HCT116 (cell line): ENCODE measurements at regions of chr11 and their contacts with region 1.

Region 1: DNA sequence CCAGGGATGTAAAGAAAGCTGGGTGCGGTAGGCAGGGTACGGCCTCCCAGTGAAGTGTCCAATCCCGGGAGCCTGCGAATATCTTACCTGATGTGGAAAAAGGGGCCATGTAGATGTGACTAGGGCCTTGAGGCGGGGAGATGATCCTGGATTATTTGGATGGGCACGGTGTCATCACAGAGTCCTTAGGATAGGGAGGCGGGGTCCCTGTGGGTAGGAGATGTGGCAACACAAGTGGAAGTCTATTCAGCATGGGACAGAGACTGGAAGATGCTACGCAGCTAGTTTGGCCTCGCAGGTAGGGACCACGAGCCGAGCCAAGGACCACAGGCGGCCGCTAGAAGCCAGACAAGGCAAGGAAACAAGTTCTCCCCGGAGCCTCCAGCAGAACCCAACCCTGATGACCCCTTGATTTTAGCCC is 46.4 kb upstream of the SHANK2 start:
- DNase-seq: no peak
- ATAC-seq: peak; percentile 10; the same call in 1 of the 2 replicates
- H3K4me3 ChIP-seq: peak overlapping the region; percentile 23 to 46
- H3K27ac ChIP-seq: peak overlapping the region; percentile 59; the same call in 1 of the 2 replicates
- H3K4me1 ChIP-seq: peaks cover 15 to 41% of the 10 kb centered on the region in 2 experiments
- H3K27me3 ChIP-seq: no peaks in the 10 kb centered on the region
- CTCF ChIP-seq: no peak
- POLR2A ChIP-seq: no peak
- RAD21 ChIP-seq: no peak

Region 2: GRCh38 chr11:70915158-70915985 is 383.4 kb before region 1 on chr11:
- CTCF ChIA-PET with region 1: no interaction called
- POLR2A ChIA-PET with region 1: no interaction called
- RAD21 ChIA-PET with region 1: no interaction called
- intact Hi-C with region 1: no loop called
- DNase-seq: no peak
- ATAC-seq: no peak
- H3K4me3 ChIP-seq: no peak overlapping the region
- H3K27ac ChIP-seq: no peak overlapping the region
- H3K4me1 ChIP-seq: no peaks in the 10 kb centered on the region
- H3K27me3 ChIP-seq: no peaks in the 10 kb centered on the region
- CTCF ChIP-seq: no peak
- POLR2A ChIP-seq: no peak
- RAD21 ChIP-seq: no peak

Region 3: DNA sequence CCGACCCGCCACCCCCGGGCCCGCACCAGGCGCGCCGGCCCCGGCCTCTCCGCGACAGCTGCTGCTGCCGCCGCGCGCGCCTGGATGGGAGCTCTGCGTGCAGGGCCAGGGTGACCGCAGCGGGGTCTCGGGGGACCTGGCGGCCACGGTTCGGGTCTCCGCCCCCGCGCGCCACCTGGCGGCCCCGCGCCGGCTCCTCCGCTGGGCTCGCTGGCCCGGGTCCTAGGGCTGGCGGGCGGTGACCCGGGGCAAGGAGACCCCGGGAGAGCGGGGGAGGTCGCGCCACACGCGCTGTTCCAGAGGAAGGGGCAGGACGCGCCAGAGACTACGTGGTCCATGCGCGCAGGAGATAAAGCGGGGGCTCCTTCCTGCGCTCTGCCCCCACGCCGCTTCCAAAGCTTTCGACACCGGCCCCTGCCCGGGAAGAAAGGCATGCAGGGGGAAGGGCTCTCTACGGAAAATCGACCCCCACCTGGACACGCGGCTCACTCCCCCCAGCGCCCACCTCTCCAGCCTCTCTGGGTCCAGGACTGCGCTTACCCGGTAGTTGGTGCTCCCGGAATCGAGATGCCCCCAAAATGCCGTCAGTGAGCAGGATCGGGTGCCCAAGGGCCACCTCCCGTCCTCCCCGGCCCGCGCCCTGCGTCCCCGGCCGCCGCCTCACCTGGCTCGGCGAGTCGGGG is 46.9 kb before region 1 on chr11:
- CTCF ChIA-PET with region 1: interaction called, 3 read pairs
- POLR2A ChIA-PET with region 1: no interaction called
- RAD21 ChIA-PET with region 1: no interaction called
- intact Hi-C with region 1: loop called (anchors 2 kb)
- DNase-seq: no peak
- ATAC-seq: peak; percentile 60
- H3K4me3 ChIP-seq: peak overlapping the region; percentile 68 to 81
- H3K27ac ChIP-seq: peak overlapping the region; percentile 85
- H3K4me1 ChIP-seq: peaks cover 5 to 13% of the 10 kb centered on the region in 2 experiments
- H3K27me3 ChIP-seq: no peaks in the 10 kb centered on the region
- CTCF ChIP-seq: peak; percentile 14 to 56 (median 42); a peak in 5 of 6 replicates
- POLR2A ChIP-seq: no peak
- RAD21 ChIP-seq: peak; percentile 31; the same call in 1 of the 2 replicates

Region 4: DNA sequence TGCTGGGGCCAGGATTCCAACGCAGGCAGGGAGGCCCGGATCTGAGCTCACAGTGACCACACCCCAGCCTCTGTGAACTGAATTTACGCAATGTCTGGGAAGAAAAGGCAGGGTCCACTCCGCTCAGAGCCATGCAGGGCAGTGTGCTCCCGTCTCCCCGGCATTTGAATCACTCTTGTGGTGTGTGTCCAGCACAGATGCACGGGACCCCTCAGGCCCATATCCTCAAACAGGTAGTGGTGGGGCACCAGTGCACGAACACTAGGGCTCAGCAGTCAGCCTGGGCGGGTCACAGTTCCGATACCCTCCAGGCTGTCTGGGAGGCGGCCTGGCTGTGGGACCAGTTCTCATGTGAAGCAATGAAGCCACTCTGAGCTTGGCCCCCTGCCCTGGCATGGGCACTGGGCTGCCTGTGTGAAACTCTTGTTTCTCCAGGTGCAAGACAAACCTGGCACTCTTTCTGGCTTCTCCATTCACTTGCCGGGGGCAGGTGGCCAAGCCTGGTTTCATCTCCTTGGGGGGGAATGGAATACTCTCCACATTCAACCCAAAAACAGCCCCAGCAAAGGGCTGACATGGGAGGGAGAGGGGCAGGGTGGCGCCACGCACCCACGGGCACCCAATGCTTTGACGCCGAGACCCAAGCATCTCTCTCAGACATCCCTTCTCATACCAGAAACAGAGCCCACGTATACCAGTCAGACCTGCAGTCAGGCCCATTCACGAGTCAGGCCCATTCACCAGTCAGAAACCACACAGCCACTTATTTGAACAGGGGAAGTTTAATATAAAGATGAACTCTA is 135.1 kb after region 1 on chr11:
- CTCF ChIA-PET with region 1: no interaction called
- POLR2A ChIA-PET with region 1: no interaction called
- RAD21 ChIA-PET with region 1: no interaction called
- intact Hi-C with region 1: no loop called
- DNase-seq: no peak
- ATAC-seq: peak; percentile 18; the same call in 1 of the 2 replicates
- H3K4me3 ChIP-seq: no peak overlapping the region
- H3K27ac ChIP-seq: no peak overlapping the region
- H3K4me1 ChIP-seq: no peaks in the 10 kb centered on the region; a peak in 1 of 4 replicates
- H3K27me3 ChIP-seq: no peaks in the 10 kb centered on the region
- CTCF ChIP-seq: no peak
- POLR2A ChIP-seq: no peak
- RAD21 ChIP-seq: no peak